ENCODE measurements at regions of chr1 and their contacts with region 1.

Region 1: GRCh38 chr1:166136222-166136621 is 30.6 kb downstream of the FAM78B start:
- DNase-seq: no peak
- H3K4me3 ChIP-seq: no peak overlapping the region
- H3K27ac ChIP-seq: no peak overlapping the region
- H3K4me1 ChIP-seq: no peaks in the 10 kb centered on the region
- H3K27me3 ChIP-seq: peaks cover 5% of the 10 kb centered on the region; the same call in 1 of the 2 replicates
- CTCF ChIP-seq: no peak

Region 2: GRCh38 chr1:165815725-165816124 is 320.5 kb before region 1 on chr1:
- CTCF ChIA-PET with region 1: no interaction called
- POLR2A ChIA-PET with region 1: no interaction called
- intact Hi-C with region 1: no loop called
- DNase-seq: peak in 1 of 2 experiments; percentile 41
- H3K4me3 ChIP-seq: no peak overlapping the region
- H3K27ac ChIP-seq: no peak overlapping the region
- H3K4me1 ChIP-seq: no peaks in the 10 kb centered on the region
- H3K27me3 ChIP-seq: no peaks in the 10 kb centered on the region
- CTCF ChIP-seq: no peak

Region 3: DNA sequence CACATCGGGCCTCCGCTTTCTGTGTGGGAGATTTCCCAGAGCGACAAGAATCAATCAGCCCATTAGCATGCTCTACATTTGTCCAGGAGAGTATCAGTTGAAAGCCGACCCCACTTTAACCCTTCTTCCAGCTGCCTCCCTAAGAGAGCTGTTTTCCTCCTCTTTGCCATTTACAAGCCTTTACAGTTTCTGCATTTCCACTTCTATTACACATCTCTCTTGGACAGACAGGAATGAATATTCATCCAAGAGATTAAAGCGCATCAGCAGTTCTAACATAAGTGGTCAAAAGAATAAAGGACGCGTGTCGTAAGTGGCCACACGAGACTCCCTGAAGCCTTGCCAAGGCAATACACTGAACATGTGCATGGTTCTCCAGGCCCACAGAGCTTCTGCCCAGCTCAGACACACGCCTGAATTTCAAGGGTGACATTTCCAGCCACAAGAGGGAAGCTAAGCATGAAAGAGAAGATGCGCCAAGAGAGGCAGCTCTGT is 16.7 kb before region 1 on chr1:
- CTCF ChIA-PET with region 1: no interaction called
- POLR2A ChIA-PET with region 1: no interaction called
- intact Hi-C with region 1: no loop called
- DNase-seq: no peak
- H3K4me3 ChIP-seq: no peak overlapping the region
- H3K27ac ChIP-seq: no peak overlapping the region
- H3K4me1 ChIP-seq: no peaks in the 10 kb centered on the region
- H3K27me3 ChIP-seq: peaks cover 52% of the 10 kb centered on the region
- CTCF ChIP-seq: no peak

Region 4: GRCh38 chr1:166184897-166185296 is 48.7 kb after region 1 on chr1:
- CTCF ChIA-PET with region 1: no interaction called
- POLR2A ChIA-PET with region 1: no interaction called
- intact Hi-C with region 1: loop called (anchors 1 kb)
- DNase-seq: no peak
- H3K4me3 ChIP-seq: no peak overlapping the region
- H3K27ac ChIP-seq: no peak overlapping the region
- H3K4me1 ChIP-seq: no peaks in the 10 kb centered on the region
- H3K27me3 ChIP-seq: peaks cover 5% of the 10 kb centered on the region; the same call in 1 of the 2 replicates
- CTCF ChIP-seq: no peak

Measured in PC-9 (cell line).